HCT116 (cell line): ENCODE measurements at regions of chr7 and their contacts with region 1.

Region 1: GRCh38 chr7:82044497-82045080 is 274.7 kb upstream of the HGF start:
- DNase-seq: peak; percentile 23
- ATAC-seq: no peak
- H3K4me3 ChIP-seq: no peak overlapping the region
- H3K27ac ChIP-seq: no peak overlapping the region
- H3K4me1 ChIP-seq: peaks cover 5% of the 10 kb centered on the region in 2 experiments; a peak in 3 of 4 replicates
- H3K27me3 ChIP-seq: no peaks in the 10 kb centered on the region
- CTCF ChIP-seq: peak; percentile 49 to 66 (median 50)
- POLR2A ChIP-seq: no peak
- RAD21 ChIP-seq: peak; percentile 85

Region 2: GRCh38 chr7:81267508-81267907 is 777.1 kb before region 1 on chr7:
- CTCF ChIA-PET with region 1: no interaction called
- POLR2A ChIA-PET with region 1: no interaction called
- RAD21 ChIA-PET with region 1: no interaction called
- intact Hi-C with region 1: no loop called
- DNase-seq: no peak
- ATAC-seq: no peak
- H3K4me3 ChIP-seq: no peak overlapping the region
- H3K27ac ChIP-seq: no peak overlapping the region
- H3K4me1 ChIP-seq: no peaks in the 10 kb centered on the region
- H3K27me3 ChIP-seq: no peaks in the 10 kb centered on the region
- CTCF ChIP-seq: no peak
- POLR2A ChIP-seq: no peak
- RAD21 ChIP-seq: no peak

Region 3: GRCh38 chr7:82091126-82091684 is 46.6 kb after region 1 on chr7:
- CTCF ChIA-PET with region 1: no interaction called
- POLR2A ChIA-PET with region 1: no interaction called
- RAD21 ChIA-PET with region 1: no interaction called
- intact Hi-C with region 1: no loop called
- DNase-seq: no peak
- ATAC-seq: no peak
- H3K4me3 ChIP-seq: no peak overlapping the region
- H3K27ac ChIP-seq: no peak overlapping the region
- H3K4me1 ChIP-seq: no peaks in the 10 kb centered on the region
- H3K27me3 ChIP-seq: no peaks in the 10 kb centered on the region
- CTCF ChIP-seq: no peak
- POLR2A ChIP-seq: no peak
- RAD21 ChIP-seq: no peak

Region 4: GRCh38 chr7:82234457-82235049 is 190.0 kb after region 1 on chr7:
- CTCF ChIA-PET with region 1: no interaction called
- POLR2A ChIA-PET with region 1: no interaction called
- RAD21 ChIA-PET with region 1: no interaction called
- intact Hi-C with region 1: loop called (anchors 10 kb)
- DNase-seq: peak; percentile 31
- ATAC-seq: 0 out of 2 replicates have a peak, but pooled peaks have one; percentile 38
- H3K4me3 ChIP-seq: no peak overlapping the region
- H3K27ac ChIP-seq: no peak overlapping the region
- H3K4me1 ChIP-seq: no peaks in the 10 kb centered on the region
- H3K27me3 ChIP-seq: no peaks in the 10 kb centered on the region
- CTCF ChIP-seq: peak; percentile 47 to 74 (median 63); a peak in 5 of 6 replicates
- POLR2A ChIP-seq: no peak
- RAD21 ChIP-seq: peak; percentile 70

Region 5: GRCh38 chr7:82481499-82482097 is 437.0 kb after region 1 on chr7:
- CTCF ChIA-PET with region 1: no interaction called
- POLR2A ChIA-PET with region 1: no interaction called
- RAD21 ChIA-PET with region 1: no interaction called
- intact Hi-C with region 1: loop called (anchors 5 kb)
- DNase-seq: peak; percentile 12
- ATAC-seq: no peak
- H3K4me3 ChIP-seq: no peak overlapping the region
- H3K27ac ChIP-seq: no peak overlapping the region
- H3K4me1 ChIP-seq: no peaks in the 10 kb centered on the region
- H3K27me3 ChIP-seq: no peaks in the 10 kb centered on the region
- CTCF ChIP-seq: peak; percentile 39 to 72 (median 58); a peak in 5 of 6 replicates
- POLR2A ChIP-seq: no peak
- RAD21 ChIP-seq: peak; percentile 49

Region 6: GRCh38 chr7:82572195-82572880 is 527.7 kb after region 1 on chr7:
- CTCF ChIA-PET with region 1: interaction called, 6 read pairs
- POLR2A ChIA-PET with region 1: no interaction called
- RAD21 ChIA-PET with region 1: no interaction called
- intact Hi-C with region 1: loop called (anchors 1 kb)
- DNase-seq: peak; percentile 76
- ATAC-seq: peak; percentile 97
- H3K4me3 ChIP-seq: no peak overlapping the region
- H3K27ac ChIP-seq: no peak overlapping the region
- H3K4me1 ChIP-seq: peaks cover 0 to 8% of the 10 kb centered on the region in 2 experiments; a peak in 1 of 4 replicates
- H3K27me3 ChIP-seq: no peaks in the 10 kb centered on the region
- CTCF ChIP-seq: peak; percentile 79 to 92 (median 90)
- POLR2A ChIP-seq: no peak
- RAD21 ChIP-seq: peak; percentile 90

Region 7: DNA sequence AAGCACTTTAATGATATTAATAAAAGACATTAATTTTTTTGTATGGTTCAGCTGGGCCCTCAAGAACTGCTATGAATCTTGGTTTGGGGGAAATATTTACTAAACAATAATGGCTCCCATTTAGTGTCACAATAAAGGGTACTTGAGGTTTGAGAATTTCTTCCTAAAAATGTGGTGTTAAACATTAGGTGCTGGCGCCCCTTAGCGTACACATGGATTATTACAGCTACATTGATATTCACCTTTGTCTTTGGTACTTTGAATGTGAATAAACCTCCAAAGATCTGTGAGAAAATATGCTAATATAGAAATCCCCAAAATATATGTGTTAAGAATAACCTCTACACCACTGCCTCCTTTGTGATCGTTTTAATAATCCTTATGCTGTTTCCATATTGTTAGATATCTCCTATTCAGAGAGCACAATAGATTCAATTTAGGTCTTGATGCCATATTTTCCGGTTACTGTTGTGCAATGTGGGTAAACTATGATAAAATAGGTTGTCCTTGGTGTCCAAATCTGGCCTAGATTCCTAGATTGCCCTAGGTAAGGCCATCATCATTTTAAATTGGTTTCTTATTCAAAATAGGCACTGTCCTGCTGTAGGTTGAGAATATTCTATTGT is 560.8 kb after region 1 on chr7:
- CTCF ChIA-PET with region 1: interaction called, 13 read pairs
- POLR2A ChIA-PET with region 1: no interaction called
- RAD21 ChIA-PET with region 1: no interaction called
- intact Hi-C with region 1: loop called (anchors 2 kb)
- DNase-seq: peak; percentile 18
- ATAC-seq: peak; percentile 62; the same call in 1 of the 2 replicates
- H3K4me3 ChIP-seq: no peak overlapping the region
- H3K27ac ChIP-seq: no peak overlapping the region
- H3K4me1 ChIP-seq: 0 out of 4 replicates have a peak, but pooled peaks cover 0 to 2% of the 10 kb centered on the region in 2 experiments
- H3K27me3 ChIP-seq: no peaks in the 10 kb centered on the region
- CTCF ChIP-seq: peak; percentile 56 to 86 (median 60); a peak in 5 of 6 replicates
- POLR2A ChIP-seq: no peak
- RAD21 ChIP-seq: peak; percentile 74